Panc1 (cell line): ENCODE measurements at regions of chr2 and their contacts with region 1.

Region 1: DNA sequence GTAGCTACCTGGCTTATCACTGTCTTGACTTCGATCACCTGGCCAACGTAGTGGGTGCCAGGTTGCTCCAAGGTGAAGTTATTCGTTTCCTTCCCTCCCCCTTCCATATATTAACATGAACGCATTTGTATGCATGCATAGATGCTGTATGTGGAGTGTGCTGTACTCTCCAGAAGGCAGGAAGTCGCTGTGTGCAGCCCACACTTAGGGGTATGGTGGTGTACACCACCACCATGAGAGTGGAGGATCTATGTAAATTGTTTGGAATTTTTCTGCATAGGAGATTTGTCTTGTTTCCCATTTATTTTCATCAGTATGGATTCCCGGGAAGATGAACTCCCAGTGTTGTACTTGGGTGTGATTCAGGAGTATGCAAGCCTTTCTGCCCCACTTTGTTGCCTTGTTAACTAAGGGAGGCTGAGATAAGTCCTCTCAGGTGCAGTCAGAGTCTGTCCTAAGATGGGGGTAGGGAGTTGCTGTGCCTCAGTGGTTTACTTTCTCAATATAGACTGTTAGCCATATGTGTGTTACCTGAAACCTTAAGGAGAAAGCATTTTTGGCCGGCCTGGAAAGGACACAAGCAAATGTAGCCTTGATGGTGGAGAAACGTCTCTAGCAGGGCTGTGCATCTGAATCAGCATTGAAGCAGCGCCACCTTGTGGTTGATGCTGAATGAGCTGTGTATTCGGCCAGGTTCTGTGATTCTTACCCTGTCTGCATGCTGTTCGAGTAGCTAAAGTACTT is 149.8 kb downstream of the TANC1 start:
- DNase-seq: peak; percentile 71
- ATAC-seq: peak; percentile 96
- H3K4me3 ChIP-seq: no peak overlapping the region
- H3K27ac ChIP-seq: peak overlapping the region; percentile 64
- H3K4me1 ChIP-seq: peaks cover 21% of the 10 kb centered on the region
- H3K27me3 ChIP-seq: no peaks in the 10 kb centered on the region
- CTCF ChIP-seq: peak; percentile 90

Region 2: DNA sequence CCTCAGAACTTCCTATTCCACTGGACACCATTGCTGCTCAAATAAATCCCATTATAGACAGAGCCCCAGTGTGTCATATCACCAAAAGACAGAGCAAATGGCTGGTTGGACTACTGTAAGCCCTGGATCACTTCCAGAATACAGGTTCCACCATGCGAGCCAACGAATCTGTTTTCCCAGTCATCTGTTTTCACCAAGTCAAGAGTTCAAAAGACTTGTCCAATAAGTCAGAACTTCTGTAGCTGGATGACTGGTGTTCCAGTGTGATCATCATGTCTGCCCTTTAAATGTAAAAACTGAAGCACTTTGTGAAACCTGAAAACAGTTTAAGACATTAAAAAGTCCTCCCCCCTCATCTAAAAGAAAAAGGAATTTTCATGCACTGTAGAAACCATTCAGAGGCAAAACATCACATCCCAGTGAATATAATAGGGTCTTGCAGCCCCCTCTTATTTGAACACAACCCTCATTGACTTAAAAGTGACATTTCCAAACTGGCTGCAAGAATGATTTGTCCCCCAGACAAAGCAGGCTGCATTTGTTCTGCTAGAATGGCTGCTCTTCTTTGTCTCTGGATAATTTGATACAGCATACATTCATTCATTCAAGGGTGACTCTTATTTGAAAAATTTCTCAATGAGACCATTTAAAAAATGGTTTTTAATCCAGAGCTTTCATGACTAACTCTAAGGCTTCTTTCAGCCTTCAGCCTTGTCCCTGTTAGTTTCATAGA is 214.4 kb before region 1 on chr2:
- CTCF ChIA-PET with region 1: interaction called, 5 read pairs
- POLR2A ChIA-PET with region 1: no interaction called
- in situ Hi-C with region 1: no loop called
- intact Hi-C with region 1: loop called (anchors 1 kb)
- DNase-seq: no peak
- ATAC-seq: no peak
- H3K4me3 ChIP-seq: no peak overlapping the region
- H3K27ac ChIP-seq: no peak overlapping the region
- H3K4me1 ChIP-seq: peaks cover 3% of the 10 kb centered on the region; the same call in 1 of the 2 replicates
- H3K27me3 ChIP-seq: no peaks in the 10 kb centered on the region
- CTCF ChIP-seq: no peak

Region 3: DNA sequence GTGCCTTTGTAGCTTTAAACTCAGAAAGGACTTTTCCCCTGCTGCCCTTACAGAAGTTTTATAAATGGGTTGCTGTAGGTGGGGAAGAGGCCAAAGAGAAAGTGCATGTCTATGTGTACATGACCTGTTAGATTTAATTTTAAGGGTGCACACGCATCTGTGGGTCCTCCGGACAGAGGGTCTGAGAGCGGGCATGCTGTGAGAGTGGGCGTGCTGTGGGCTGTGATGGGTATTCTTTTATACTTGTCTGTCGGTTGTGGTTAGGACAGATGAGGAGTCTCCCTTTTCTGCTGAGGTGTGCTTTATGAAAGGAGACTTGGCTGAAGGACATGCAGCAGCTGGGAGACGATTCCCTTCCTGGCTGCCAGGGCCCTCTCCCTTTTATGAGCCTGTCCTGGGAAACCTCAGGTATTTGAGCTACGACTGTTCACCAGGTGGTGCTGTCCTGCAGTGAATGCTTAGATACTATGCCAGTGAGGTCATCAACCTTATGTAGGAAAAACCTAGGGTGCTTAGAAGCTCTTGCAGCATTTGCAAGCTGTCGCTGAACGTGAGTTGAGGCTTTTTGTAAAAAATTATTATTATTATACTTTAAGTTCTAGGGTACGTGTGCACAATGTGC is 82.4 kb before region 1 on chr2:
- CTCF ChIA-PET with region 1: interaction called, 5 read pairs
- POLR2A ChIA-PET with region 1: no interaction called
- in situ Hi-C with region 1: no loop called
- intact Hi-C with region 1: loop called (anchors 10 kb)
- DNase-seq: no peak
- ATAC-seq: peak; percentile 89
- H3K4me3 ChIP-seq: no peak overlapping the region
- H3K27ac ChIP-seq: peak overlapping the region; percentile 42; the same call in 1 of the 2 replicates
- H3K4me1 ChIP-seq: peaks cover 21% of the 10 kb centered on the region
- H3K27me3 ChIP-seq: no peaks in the 10 kb centered on the region
- CTCF ChIP-seq: peak; percentile 41

Region 4: GRCh38 chr2:159146996-159147666 is 28.8 kb after region 1 on chr2:
- CTCF ChIA-PET with region 1: interaction called, 10 read pairs
- POLR2A ChIA-PET with region 1: no interaction called
- in situ Hi-C with region 1: no loop called
- intact Hi-C with region 1: no loop called
- DNase-seq: no peak
- ATAC-seq: peak; percentile 42; the same call in 1 of the 2 replicates
- H3K4me3 ChIP-seq: no peak overlapping the region
- H3K27ac ChIP-seq: no peak overlapping the region
- H3K4me1 ChIP-seq: no peaks in the 10 kb centered on the region
- H3K27me3 ChIP-seq: no peaks in the 10 kb centered on the region
- CTCF ChIP-seq: no peak